ENCODE measurements at regions of chr6 and their contacts with region 1.

Region 1: DNA sequence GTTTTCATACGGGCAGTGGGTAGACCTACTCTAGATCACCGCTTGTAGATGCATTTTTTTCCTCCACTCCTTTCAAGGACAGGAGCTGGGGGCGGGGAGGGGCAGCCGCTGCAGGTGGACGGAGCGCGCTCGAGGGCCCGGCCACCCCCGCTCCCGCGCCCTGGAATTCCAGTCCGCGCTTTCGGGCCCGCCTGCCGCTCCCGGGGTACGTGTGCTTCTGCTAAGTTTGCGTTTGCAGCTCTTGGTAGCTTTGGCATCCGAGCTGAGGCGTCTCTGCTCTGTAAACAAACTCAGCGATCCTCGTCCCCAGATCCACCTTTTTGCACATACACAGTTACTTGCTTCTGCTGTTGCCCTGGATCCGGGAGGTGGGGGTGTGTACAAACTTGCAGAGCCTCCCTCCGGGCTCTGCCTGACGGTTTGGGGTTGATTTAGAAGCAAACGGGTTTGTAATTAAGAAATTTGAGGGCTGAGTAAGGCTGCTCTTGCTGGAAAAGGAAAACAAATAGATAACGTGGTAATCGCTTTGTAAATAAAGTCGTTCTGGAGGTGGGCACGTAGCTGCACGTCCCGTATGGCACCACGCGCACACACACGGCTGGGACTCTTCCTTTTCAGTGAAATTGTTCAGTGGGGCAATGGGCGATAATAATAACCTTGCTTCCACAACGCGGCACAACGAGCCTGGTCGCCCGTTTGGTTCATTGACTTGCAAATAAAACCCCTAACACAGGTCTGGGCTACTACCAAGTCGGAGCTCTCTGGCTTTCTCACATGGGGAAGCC is 976 bp upstream of the CITED2 start:
- DNase-seq: peak; percentile 96
- ATAC-seq: peak; percentile 79
- H3K4me3 ChIP-seq: peak overlapping the region; percentile 65 to 99 (median 83)
- H3K27ac ChIP-seq: peak overlapping the region; percentile 93
- H3K4me1 ChIP-seq: peaks cover 61% of the 10 kb centered on the region
- H3K27me3 ChIP-seq: peaks cover 0 to 3% of the 10 kb centered on the region in 2 experiments; a peak in 1 of 5 replicates
- CTCF ChIP-seq: peak; percentile 53
- EP300 ChIP-seq: peak; percentile 41 to 71
- POLR2A ChIP-seq: peak; percentile 52 to 71
- RAD21 ChIP-seq: peak; percentile 54; the same call in 1 of the 2 replicates

Region 2: DNA sequence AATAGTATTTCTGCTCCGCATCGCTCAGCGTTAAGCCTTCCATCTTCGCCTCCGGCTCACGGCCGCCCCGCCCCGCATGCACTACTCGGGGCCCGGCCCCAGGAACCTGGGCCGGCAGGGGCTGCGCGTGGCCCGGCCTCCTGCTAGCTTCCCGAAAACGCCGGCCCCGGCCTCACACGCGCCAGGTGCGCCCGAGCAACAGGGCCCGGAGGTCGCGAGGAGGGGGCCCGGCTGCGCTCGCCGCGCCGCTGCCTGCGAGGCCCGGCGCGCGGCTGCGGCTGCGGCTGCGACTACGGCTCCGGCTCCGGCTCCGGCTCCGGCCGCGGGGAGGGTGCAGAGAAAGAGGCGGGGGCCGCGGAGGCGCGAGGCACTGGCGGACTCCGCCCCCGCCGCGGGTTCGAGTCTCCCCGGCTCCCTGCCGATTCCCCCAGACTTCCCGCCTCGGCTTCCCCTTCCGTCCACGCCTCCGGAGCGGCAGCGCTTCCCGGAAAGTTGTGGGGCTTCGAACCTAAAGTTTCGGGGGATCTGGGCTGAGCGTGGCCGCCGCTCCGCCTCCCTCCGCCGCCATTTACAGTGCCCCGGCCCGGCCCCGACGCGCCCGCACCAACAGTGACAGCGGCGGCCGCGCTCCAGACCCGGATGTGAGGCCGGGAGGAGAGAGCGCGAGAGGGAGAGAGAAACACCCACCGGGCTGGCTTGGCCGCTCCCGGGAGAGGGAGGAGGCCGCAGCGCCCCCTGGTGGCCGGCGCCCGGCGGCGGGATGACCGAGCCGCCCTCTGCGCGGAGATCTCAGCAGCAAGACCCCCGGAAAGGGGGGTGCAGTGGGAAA is 387.6 kb before region 1 on chr6 and contains the start of gene REPS1:
- CTCF ChIA-PET with region 1: no interaction called
- POLR2A ChIA-PET with region 1: interaction called, 11 read pairs
- in situ Hi-C with region 1: no loop called
- intact Hi-C with region 1: no loop called
- DNase-seq: peak; percentile 87
- ATAC-seq: peak; percentile 93
- H3K4me3 ChIP-seq: peak within 1 kb of the TSS; percentile 78 to 98 (median 94)
- H3K27ac ChIP-seq: peak within 1 kb of the TSS; percentile 82
- H3K4me1 ChIP-seq: peaks cover 60% of the 10 kb centered on the region
- H3K27me3 ChIP-seq: peaks cover 0 to 8% of the 10 kb centered on the region in 2 experiments; a peak in 2 of 5 replicates
- CTCF ChIP-seq: peak; percentile 97
- EP300 ChIP-seq: no peak; a peak in 1 of 4 replicates
- POLR2A ChIP-seq: peak; percentile 72 to 77
- RAD21 ChIP-seq: peak; percentile 92
- total RNA-seq, gene REPS1: 36.7 and 38.3 TPM in 2 replicates

Region 3: GRCh38 chr6:139433631-139434419 is 58.4 kb after region 1 on chr6:
- CTCF ChIA-PET with region 1: no interaction called
- POLR2A ChIA-PET with region 1: no interaction called
- in situ Hi-C with region 1: no loop called
- intact Hi-C with region 1: no loop called
- DNase-seq: peak; percentile 11
- ATAC-seq: peak; percentile 65
- H3K4me3 ChIP-seq: no peak overlapping the region
- H3K27ac ChIP-seq: no peak overlapping the region
- H3K4me1 ChIP-seq: peaks cover 20% of the 10 kb centered on the region
- H3K27me3 ChIP-seq: peaks cover 0 to 1% of the 10 kb centered on the region in 2 experiments; a peak in 1 of 5 replicates
- CTCF ChIP-seq: no peak
- EP300 ChIP-seq: no peak
- POLR2A ChIP-seq: no peak
- RAD21 ChIP-seq: no peak

Region 4: GRCh38 chr6:139490482-139490881 is 115.1 kb after region 1 on chr6:
- CTCF ChIA-PET with region 1: no interaction called
- POLR2A ChIA-PET with region 1: interaction called, 10 read pairs
- in situ Hi-C with region 1: no loop called
- intact Hi-C with region 1: no loop called
- DNase-seq: peak; percentile 74
- ATAC-seq: peak; percentile 83
- H3K4me3 ChIP-seq: 0 out of 6 replicates have a peak overlapping the region, but pooled peaks of 1 of the 3 experiments have one; percentile 32
- H3K27ac ChIP-seq: no peak overlapping the region
- H3K4me1 ChIP-seq: peaks cover 32% of the 10 kb centered on the region
- H3K27me3 ChIP-seq: no peaks in the 10 kb centered on the region
- CTCF ChIP-seq: no peak
- EP300 ChIP-seq: peak in 1 of 2 experiments; percentile 25; a peak in 1 of 4 replicates
- POLR2A ChIP-seq: no peak
- RAD21 ChIP-seq: no peak

Region 5: DNA sequence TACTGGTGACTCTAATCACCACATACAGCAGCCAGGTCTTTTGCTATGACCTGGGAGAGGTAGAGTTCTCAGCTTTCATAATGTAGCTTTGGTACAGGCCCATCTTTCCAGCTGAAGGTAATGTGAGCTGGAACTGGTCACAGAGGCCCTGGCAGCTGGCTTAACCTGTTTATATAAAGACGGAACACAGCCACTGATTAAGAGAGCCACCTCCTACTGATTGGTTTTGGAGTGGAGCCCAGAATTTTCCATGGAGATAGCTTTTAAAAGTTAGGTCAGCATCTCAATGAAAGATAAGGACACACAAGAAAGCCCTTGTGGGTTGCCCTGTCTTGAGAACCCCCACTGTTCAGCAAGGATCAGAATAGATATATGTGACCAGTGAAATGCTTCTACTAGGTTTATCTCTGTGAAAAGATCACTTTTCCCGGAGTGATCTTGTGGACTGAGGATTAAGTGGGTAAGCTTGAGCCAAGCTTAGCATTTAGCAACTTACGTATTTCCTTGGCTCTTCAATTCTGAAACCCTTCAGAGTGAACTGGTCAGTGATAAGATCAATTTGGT is 212.7 kb after region 1 on chr6:
- CTCF ChIA-PET with region 1: no interaction called
- POLR2A ChIA-PET with region 1: interaction called, 21 read pairs
- in situ Hi-C with region 1: loop called (anchors 5 kb)
- intact Hi-C with region 1: loop called (anchors 2 kb)
- DNase-seq: peak; percentile 30
- ATAC-seq: peak; percentile 74
- H3K4me3 ChIP-seq: peak overlapping the region in 2 of 3 experiments; percentile 11 to 14; a peak in 2 of 6 replicates
- H3K27ac ChIP-seq: peak overlapping the region; percentile 24
- H3K4me1 ChIP-seq: peaks cover 65% of the 10 kb centered on the region
- H3K27me3 ChIP-seq: no peaks in the 10 kb centered on the region
- CTCF ChIP-seq: no peak
- EP300 ChIP-seq: no peak
- POLR2A ChIP-seq: no peak
- RAD21 ChIP-seq: no peak

Region 6: DNA sequence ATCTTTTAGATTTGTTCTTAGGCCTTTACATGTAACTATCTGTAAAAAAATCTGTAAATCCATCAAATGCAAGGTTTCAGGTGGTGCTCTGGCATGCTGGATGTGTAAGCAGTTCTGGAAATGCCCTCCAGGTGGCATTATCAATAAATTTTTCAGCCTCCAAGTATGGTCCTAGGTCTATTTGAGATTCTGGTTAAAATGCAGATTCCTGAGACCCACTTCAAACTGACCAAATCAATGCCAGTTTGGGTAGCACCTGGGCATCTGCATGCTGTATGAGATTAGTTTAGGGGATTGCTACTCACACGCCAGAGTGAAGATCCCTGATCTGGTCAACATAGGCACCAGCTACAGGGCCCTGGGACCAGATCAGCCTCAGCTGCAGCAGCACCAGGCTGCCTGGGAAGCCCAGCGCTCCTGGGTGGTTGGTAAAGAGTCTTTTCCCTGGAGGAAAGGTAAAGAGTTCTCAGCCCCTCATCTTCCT is 506.3 kb after region 1 on chr6:
- CTCF ChIA-PET with region 1: no interaction called
- POLR2A ChIA-PET with region 1: no interaction called
- in situ Hi-C with region 1: no loop called
- intact Hi-C with region 1: loop called (anchors 5 kb)
- DNase-seq: peak; percentile 34
- ATAC-seq: peak; percentile 88
- H3K4me3 ChIP-seq: no peak overlapping the region
- H3K27ac ChIP-seq: no peak overlapping the region
- H3K4me1 ChIP-seq: no peaks in the 10 kb centered on the region
- H3K27me3 ChIP-seq: no peaks in the 10 kb centered on the region
- CTCF ChIP-seq: peak; percentile 55
- EP300 ChIP-seq: no peak
- POLR2A ChIP-seq: no peak
- RAD21 ChIP-seq: peak; percentile 37; the same call in 1 of the 2 replicates

Region 7: GRCh38 chr6:140441256-140441655 is 1065.8 kb after region 1 on chr6:
- CTCF ChIA-PET with region 1: no interaction called
- POLR2A ChIA-PET with region 1: no interaction called
- in situ Hi-C with region 1: loop called (anchors 25 kb)
- intact Hi-C with region 1: loop called (anchors 1 kb)
- DNase-seq: peak; percentile 46
- ATAC-seq: peak; percentile 98
- H3K4me3 ChIP-seq: no peak overlapping the region
- H3K27ac ChIP-seq: no peak overlapping the region
- H3K4me1 ChIP-seq: peaks cover 5% of the 10 kb centered on the region; the same call in 1 of the 2 replicates
- H3K27me3 ChIP-seq: no peaks in the 10 kb centered on the region
- CTCF ChIP-seq: peak; percentile 86
- EP300 ChIP-seq: no peak
- POLR2A ChIP-seq: no peak
- RAD21 ChIP-seq: peak; percentile 82

Measured in HepG2 (cell line).